Activated B cell treated with CpG ODN at 0.5 μM for 24 hours (primary cell): ENCODE measurements at regions of chr10 and their contacts with region 1.

Region 1: GRCh38 chr10:132637477-132638129 is 100.0 kb downstream of the INPP5A start:
- DNase-seq: peak; percentile 14
- ATAC-seq: peak; percentile 66
- H3K4me3 Mint-ChIP-seq: peak overlapping the region; percentile 59
- H3K27ac Mint-ChIP-seq: peak overlapping the region; percentile 1
- H3K4me1 Mint-ChIP-seq: peaks cover 36% of the 10 kb centered on the region
- H3K27me3 Mint-ChIP-seq: no peaks in the 10 kb centered on the region
- CTCF ChIP-seq: no peak

Region 2: DNA sequence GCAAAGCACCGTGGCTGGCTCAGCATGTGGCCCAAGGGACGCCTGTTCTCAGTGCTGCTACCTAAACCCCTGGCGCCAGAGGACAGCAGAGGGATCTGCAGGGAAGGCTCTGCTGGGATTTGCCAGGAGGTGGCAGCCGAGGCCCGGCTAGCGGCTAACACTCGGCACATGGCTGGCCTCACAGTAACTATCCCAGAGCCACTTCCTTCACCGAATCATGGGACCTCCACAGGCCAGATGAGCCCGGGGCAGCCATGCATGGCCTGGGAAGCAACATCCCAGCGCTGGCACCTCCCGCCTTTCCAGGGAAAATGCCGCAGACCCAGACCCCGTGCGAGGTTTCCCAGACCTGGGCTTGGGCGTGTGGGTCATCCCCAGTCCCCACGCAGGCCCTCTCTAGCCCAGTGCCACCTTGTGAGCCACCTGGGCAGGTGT is 414.4 kb before region 1 on chr10:
- CTCF ChIA-PET with region 1: no interaction called
- POLR2A ChIA-PET with region 1: no interaction called
- intact Hi-C with region 1: loop called (anchors 1 kb)
- DNase-seq: peak; percentile 43
- ATAC-seq: peak; percentile 97
- H3K4me3 Mint-ChIP-seq: no peak overlapping the region
- H3K27ac Mint-ChIP-seq: no peak overlapping the region
- H3K4me1 Mint-ChIP-seq: peaks cover 2% of the 10 kb centered on the region
- H3K27me3 Mint-ChIP-seq: no peaks in the 10 kb centered on the region
- CTCF ChIP-seq: no peak

Region 3: GRCh38 chr10:132387764-132388210 is 249.8 kb before region 1 on chr10:
- CTCF ChIA-PET with region 1: interaction called, 4 read pairs
- POLR2A ChIA-PET with region 1: no interaction called
- intact Hi-C with region 1: loop called (anchors 1 kb)
- DNase-seq: peak; percentile 83
- ATAC-seq: peak; percentile 98
- H3K4me3 Mint-ChIP-seq: peak overlapping the region; percentile 80
- H3K27ac Mint-ChIP-seq: peak overlapping the region; percentile 85
- H3K4me1 Mint-ChIP-seq: peaks cover 7% of the 10 kb centered on the region
- H3K27me3 Mint-ChIP-seq: no peaks in the 10 kb centered on the region
- CTCF ChIP-seq: no peak

Region 4: DNA sequence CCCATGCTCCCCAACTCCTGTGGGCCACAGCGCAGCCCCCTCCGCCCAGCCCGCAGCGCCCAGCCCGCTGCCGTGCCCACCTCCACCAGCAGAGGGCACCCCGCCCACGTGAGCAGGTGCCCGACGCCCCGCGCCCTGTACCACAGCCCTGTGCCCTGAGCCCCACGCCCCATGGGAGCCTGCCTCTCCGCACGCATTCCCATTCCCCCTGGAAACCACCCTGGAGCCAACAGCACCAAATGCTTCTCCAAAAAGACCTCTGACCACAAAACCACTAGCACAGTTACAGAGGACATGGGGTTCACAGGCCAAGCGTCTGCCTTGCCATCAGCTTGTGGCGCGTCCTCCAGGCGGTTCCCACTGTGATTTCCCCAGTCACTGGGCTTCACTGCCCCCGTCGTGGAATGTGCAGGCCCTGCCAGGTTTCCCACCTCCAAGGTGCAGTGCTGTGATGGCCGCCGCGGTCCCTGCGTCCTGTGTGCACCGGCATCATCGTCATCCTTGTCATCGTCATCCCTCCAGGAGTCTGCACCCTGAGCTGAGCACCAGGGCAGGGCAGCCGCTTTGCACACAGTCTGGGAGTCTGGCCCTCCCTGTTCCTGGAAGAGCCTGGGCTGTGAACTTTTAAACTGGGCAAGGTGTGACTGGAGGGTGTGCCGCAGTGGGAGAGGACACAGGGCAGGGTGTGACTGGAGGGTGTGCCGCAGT is 178.9 kb before region 1 on chr10:
- CTCF ChIA-PET with region 1: interaction called, 21 read pairs
- POLR2A ChIA-PET with region 1: no interaction called
- intact Hi-C with region 1: loop called (anchors 1 kb)
- DNase-seq: peak; percentile 80
- ATAC-seq: peak; percentile 94
- H3K4me3 Mint-ChIP-seq: no peak overlapping the region
- H3K27ac Mint-ChIP-seq: no peak overlapping the region
- H3K4me1 Mint-ChIP-seq: peaks cover 3% of the 10 kb centered on the region
- H3K27me3 Mint-ChIP-seq: no peaks in the 10 kb centered on the region
- CTCF ChIP-seq: no peak

Region 5: DNA sequence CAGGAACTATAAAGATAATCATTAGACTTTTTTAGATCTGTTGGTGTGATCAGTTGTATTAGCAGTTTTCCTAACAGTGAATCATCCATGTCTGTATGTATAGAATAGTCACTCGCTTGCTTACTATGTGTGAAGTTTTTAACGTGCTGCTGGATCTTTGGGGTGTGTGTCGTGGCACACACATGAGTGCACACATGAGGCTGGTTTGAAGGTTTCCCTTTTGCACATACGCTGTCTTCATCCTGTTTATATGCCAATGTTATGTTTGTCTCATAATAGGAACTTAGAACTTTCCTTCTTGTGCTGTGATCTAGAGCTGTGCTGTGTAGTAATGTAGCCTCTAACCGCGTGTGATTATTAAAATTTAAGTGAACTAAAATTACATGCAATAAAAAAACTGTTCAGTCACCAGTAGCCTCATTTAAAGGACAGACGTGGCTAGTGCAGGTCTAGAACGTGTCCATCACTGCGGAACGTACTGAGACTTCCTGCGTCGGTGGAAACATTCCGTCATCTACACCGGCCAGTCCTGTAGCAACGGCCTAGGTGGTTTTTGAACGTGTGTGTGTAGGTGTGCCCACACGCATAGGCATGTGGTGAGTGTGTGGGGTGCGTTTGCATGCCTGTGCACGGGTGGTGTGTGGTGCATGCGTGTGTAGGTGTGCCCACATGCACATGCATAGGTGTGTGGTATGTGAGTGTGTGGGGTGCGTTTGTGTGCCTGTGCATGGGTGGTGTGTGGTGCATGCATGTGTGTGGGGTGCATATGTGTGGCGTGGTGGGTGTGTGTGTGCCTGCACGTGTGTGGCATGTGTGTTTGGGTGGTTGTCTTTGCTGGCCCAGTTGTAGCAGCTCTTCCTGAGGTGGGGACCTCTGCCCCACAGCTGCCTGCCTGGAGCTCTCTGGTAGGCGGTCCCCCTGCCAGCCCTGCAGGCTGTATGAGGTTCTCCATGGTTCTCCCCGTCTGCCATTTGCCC is 43.4 kb before region 1 on chr10:
- CTCF ChIA-PET with region 1: no interaction called
- POLR2A ChIA-PET with region 1: no interaction called
- intact Hi-C with region 1: loop called (anchors 1 kb)
- DNase-seq: no peak
- ATAC-seq: peak; percentile 74
- H3K4me3 Mint-ChIP-seq: peak overlapping the region; percentile 70
- H3K27ac Mint-ChIP-seq: peak overlapping the region; percentile 90
- H3K4me1 Mint-ChIP-seq: peaks cover 86% of the 10 kb centered on the region
- H3K27me3 Mint-ChIP-seq: no peaks in the 10 kb centered on the region
- CTCF ChIP-seq: no peak

Region 6: GRCh38 chr10:132667342-132668047 is 29.9 kb after region 1 on chr10:
- CTCF ChIA-PET with region 1: no interaction called
- POLR2A ChIA-PET with region 1: no interaction called
- intact Hi-C with region 1: no loop called
- DNase-seq: no peak
- ATAC-seq: no peak
- H3K4me3 Mint-ChIP-seq: no peak overlapping the region
- H3K27ac Mint-ChIP-seq: no peak overlapping the region
- H3K4me1 Mint-ChIP-seq: peaks cover 4% of the 10 kb centered on the region
- H3K27me3 Mint-ChIP-seq: no peaks in the 10 kb centered on the region
- CTCF ChIP-seq: no peak